ENCODE measurements at regions of chr13 and their contacts with region 1.

Region 1: DNA sequence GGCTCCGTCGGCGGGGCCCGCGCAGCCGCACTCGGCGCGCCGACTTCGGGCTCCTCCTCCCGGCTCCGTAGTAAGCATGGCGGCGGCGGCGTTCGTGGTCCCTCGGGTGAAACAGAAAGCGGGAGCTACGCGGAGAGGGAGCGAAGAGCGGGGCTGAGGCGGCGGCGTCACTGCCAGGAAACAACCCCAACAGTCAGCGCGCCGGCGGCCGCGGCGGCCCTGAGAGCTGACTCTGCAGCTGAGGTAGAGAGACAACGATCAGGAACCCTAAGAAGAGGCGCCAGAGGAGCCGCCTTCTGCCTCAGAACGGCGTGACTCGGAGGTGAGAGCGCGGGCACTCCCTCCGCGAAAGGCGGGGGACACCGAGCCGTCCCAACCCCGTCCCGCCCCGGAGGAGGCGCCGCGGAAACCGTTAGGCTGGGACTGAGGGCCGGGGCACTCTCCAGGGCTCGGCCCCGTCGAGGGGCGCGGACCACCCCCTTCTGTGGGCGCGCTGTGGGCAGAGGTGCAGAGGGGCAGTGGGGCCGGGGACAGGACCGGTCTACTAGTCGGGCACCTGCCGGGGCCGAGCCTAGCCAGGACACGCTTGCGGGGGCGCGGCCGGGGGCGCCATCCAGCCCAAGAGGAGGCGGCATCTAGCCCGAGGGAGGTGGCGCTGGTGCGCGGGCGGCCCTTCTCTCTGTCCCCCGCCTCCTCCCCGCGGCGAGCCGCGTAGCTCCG is at the start of gene FNDC3A:
- DNase-seq: peak; percentile 83 to 92
- H3K4me3 ChIP-seq: peak within 1 kb of the TSS; percentile 84 to 90
- H3K27ac ChIP-seq: peak within 1 kb of the TSS; percentile 96
- H3K4me1 ChIP-seq: peaks cover 0 to 46% (median 22%) of the 10 kb centered on the region in 4 donors
- H3K27me3 ChIP-seq: no peaks in the 10 kb centered on the region
- CTCF ChIP-seq: no peak

Region 2: GRCh38 chr13:48818495-48819031 is 157.5 kb before region 1 on chr13:
- intact Hi-C with region 1: loop called (anchors 10 kb)
- DNase-seq: no peak
- H3K4me3 ChIP-seq: no peak overlapping the region
- H3K27ac ChIP-seq: peak overlapping the region; percentile 19 to 62
- H3K4me1 ChIP-seq: peaks cover 0 to 56% (median 12%) of the 10 kb centered on the region in 4 donors
- H3K27me3 ChIP-seq: no peaks in the 10 kb centered on the region
- CTCF ChIP-seq: no peak

Region 3: DNA sequence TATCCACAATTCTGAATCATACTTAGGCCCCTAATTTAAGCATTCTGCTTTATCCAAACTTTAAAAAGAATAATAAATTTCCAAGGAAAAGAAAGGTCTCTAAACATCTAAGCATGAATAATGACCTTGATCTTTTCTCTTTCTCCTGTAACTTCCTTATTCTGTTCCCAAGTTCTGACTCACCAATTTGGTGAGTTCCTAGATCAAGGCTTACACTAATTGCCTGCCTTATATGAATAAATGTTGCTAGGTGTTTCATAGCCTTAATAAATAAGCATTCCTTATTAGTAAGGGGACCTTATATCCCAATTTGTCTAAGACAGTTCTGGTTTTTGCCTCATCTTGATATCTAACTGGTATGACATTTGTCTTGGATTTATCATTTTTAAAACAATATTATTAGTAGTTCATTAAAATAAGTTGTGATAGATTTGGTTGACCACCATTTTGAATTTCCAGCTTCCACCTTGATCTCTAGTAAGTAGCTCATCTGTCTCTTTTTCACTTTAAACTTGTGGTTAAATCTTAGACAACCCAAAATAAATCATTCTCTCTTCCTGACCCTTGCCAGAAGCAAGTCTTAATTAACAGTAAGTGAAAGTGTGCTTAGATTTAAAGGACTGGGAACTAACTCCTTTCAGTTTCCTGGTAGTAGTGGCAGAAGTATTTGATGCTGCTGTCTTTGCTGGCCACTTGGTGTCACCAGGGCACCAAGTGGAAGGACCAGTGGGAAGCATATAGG is 122.9 kb after region 1 on chr13:
- intact Hi-C with region 1: loop called (anchors 10 kb)
- DNase-seq: no peak
- H3K4me3 ChIP-seq: no peak overlapping the region
- H3K27ac ChIP-seq: peak overlapping the region in 1 of 2 donors; percentile 29
- H3K4me1 ChIP-seq: peaks cover 0 to 37% (median 23%) of the 10 kb centered on the region in 4 donors
- H3K27me3 ChIP-seq: no peaks in the 10 kb centered on the region
- CTCF ChIP-seq: peak in 1 of 2 experiments; percentile 22

Region 4: GRCh38 chr13:49247643-49248621 is 271.9 kb after region 1 on chr13 and contains the start of gene CDADC1:
- intact Hi-C with region 1: loop called (anchors 10 kb)
- DNase-seq: peak; percentile 97 to 98
- H3K4me3 ChIP-seq: peak within 1 kb of the TSS; percentile 84 to 91
- H3K27ac ChIP-seq: peak within 1 kb of the TSS; percentile 91 to 93
- H3K4me1 ChIP-seq: peaks cover 0 to 20% (median 13%) of the 10 kb centered on the region in 4 donors
- H3K27me3 ChIP-seq: no peaks in the 10 kb centered on the region
- CTCF ChIP-seq: no peak

Region 5: GRCh38 chr13:49494645-49495044 is 518.6 kb after region 1 on chr13:
- intact Hi-C with region 1: loop called (anchors 5 kb)
- DNase-seq: no peak
- H3K4me3 ChIP-seq: peak overlapping the region; percentile 66 to 79
- H3K27ac ChIP-seq: peak overlapping the region; percentile 88 to 92
- H3K4me1 ChIP-seq: peaks cover 0 to 10% (median 3%) of the 10 kb centered on the region in 4 donors
- H3K27me3 ChIP-seq: no peaks in the 10 kb centered on the region
- CTCF ChIP-seq: no peak